ENCODE measurements at regions of chr3 and their contacts with region 1.

Region 1: DNA sequence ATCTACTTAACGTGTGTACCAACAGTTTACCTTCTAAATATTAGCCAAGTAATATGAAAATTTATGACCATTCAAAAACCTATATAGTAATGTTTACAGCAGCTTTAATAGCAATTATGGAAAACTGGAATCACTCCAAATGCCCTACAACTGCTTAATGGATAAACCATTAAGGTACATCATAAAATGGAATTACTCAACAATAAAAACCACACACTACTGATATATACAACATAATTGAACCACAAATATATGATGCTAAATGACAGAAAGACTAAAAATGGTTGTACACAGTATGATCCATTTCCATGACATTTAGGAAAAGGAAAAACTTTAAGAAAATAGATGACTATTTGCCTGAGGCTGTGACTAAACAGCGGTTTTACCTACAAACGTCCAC is 467.1 kb upstream of the EPHA6 start:
- H3K4me3 Mint-ChIP-seq: no peak overlapping the region
- H3K27ac Mint-ChIP-seq: no peak overlapping the region
- H3K4me1 Mint-ChIP-seq: no peaks in the 10 kb centered on the region
- H3K27me3 Mint-ChIP-seq: no peaks in the 10 kb centered on the region

Region 2: GRCh38 chr3:96000966-96001365 is 346.3 kb before region 1 on chr3:
- intact Hi-C with region 1: no loop called
- H3K4me3 Mint-ChIP-seq: no peak overlapping the region
- H3K27ac Mint-ChIP-seq: no peak overlapping the region
- H3K4me1 Mint-ChIP-seq: no peaks in the 10 kb centered on the region
- H3K27me3 Mint-ChIP-seq: no peaks in the 10 kb centered on the region

Region 3: DNA sequence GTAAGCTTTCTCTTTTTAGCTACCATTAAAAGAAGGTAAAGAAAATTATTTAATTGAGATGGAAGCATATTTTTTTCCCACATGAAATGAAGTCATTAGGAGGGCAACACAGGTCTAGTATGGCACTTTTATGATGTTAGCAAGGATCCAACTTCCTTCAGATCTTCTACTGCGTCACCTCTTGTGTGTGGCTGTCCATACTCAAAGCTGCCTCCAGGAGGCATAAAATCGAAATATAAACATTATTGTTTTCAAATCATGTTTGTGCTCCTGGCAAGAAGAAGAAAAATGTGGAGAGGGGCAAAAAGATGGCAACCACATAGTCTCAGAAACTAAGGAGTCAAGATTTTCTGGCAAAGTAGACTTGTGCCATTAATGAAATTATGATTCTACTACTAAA is 324.6 kb before region 1 on chr3:
- intact Hi-C with region 1: no loop called
- H3K4me3 Mint-ChIP-seq: no peak overlapping the region
- H3K27ac Mint-ChIP-seq: no peak overlapping the region
- H3K4me1 Mint-ChIP-seq: no peaks in the 10 kb centered on the region
- H3K27me3 Mint-ChIP-seq: no peaks in the 10 kb centered on the region

Region 4: GRCh38 chr3:96319171-96319570 is 28.1 kb before region 1 on chr3:
- intact Hi-C with region 1: loop called (anchors 5 kb)
- H3K4me3 Mint-ChIP-seq: no peak overlapping the region
- H3K27ac Mint-ChIP-seq: no peak overlapping the region
- H3K4me1 Mint-ChIP-seq: no peaks in the 10 kb centered on the region
- H3K27me3 Mint-ChIP-seq: no peaks in the 10 kb centered on the region

Measured in dendritic cell treated with granulocyte-macrophage colony-stimulating factor and Interleukin-4, amounts not matched to agents 40 ng/mL and 50 ng/mL, for 4 days (primary cell).